ACHN (cell line): ENCODE measurements at regions of chr17 and their contacts with region 1.

Region 1: GRCh38 chr17:72725433-72726068 is 366.9 kb downstream of the SLC39A11 start:
- DNase-seq: peak; percentile 74

Region 2: GRCh38 chr17:72656130-72656763 is 69.3 kb before region 1 on chr17:
- in situ Hi-C with region 1: no loop called
- DNase-seq: no peak

Region 3: DNA sequence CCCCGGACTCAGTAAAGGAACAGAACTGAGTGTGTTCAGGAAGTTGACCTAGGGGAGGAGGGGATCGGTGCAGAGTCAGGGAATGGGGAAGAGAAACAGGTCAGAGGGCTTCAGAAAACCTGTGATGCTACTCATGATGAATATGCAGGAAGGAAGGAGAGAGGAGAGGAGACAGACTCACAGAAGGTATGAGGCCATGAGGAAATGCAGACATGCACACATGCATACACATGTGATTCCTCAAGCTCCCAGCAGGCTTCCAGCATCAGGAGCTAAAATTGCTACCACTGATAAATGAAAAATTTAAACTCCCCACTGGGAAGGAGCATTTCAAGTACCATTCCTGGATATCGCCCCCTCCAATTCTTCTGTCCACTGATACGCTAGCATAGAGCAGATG is 104.3 kb after region 1 on chr17:
- in situ Hi-C with region 1: no loop called
- DNase-seq: no peak

Region 4: GRCh38 chr17:73156166-73156840 is 430.8 kb after region 1 on chr17:
- in situ Hi-C with region 1: loop called (anchors 25 kb)
- DNase-seq: peak; percentile 74